ENCODE measurements at regions of chrX and their contacts with region 1.

Region 1: DNA sequence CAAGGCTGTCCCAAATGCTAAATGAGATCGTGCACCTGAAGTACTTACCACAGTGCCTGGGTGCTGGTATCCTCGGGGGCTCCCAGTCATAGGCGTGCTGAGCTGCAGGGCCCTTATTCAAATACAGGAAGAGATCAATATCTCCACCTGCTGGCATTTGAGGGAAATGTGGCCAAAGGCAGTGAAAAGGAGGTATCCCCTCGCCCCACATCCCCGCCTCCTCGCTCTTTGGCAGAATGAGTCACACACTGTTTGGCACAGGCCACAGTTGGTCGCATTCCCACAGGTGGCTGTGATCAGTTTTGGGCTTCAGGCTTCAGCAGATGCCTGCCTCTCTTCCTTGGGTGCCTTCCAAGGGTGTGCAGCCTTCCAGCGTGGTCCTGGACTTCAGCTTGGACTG is 28.4 kb downstream of the ZNF185 start:
- H3K4me3 ChIP-seq: no peak overlapping the region
- H3K27ac ChIP-seq: no peak overlapping the region
- H3K4me1 ChIP-seq: no peaks in the 10 kb centered on the region
- CTCF ChIP-seq: peak; percentile 30; the same call in 1 of the 2 replicates

Region 2: DNA sequence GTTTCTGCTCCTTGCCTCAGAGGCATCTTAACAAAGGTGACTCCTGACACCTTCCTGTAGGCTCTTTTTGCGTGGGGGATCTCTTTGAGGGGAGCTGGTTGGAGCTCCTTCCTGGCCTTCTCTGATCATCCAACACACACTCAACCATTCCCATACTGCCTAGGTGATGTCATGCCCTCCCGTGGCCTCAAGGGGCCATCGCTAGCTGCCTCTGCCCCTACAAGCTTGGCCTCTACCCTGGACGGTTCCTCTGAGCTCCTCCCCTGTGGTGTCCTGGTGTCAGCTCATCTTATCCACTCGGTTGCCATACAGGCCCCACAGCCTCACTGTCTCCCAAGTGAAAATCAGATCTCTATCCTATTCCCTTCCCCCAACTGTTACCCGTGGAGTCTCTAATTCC is 42.1 kb before region 1 on chrX:
- CTCF ChIA-PET with region 1: interaction called, 10 read pairs
- POLR2A ChIA-PET with region 1: no interaction called
- H3K4me3 ChIP-seq: no peak overlapping the region
- H3K27ac ChIP-seq: no peak overlapping the region
- H3K4me1 ChIP-seq: no peaks in the 10 kb centered on the region
- CTCF ChIP-seq: no peak

Region 3: DNA sequence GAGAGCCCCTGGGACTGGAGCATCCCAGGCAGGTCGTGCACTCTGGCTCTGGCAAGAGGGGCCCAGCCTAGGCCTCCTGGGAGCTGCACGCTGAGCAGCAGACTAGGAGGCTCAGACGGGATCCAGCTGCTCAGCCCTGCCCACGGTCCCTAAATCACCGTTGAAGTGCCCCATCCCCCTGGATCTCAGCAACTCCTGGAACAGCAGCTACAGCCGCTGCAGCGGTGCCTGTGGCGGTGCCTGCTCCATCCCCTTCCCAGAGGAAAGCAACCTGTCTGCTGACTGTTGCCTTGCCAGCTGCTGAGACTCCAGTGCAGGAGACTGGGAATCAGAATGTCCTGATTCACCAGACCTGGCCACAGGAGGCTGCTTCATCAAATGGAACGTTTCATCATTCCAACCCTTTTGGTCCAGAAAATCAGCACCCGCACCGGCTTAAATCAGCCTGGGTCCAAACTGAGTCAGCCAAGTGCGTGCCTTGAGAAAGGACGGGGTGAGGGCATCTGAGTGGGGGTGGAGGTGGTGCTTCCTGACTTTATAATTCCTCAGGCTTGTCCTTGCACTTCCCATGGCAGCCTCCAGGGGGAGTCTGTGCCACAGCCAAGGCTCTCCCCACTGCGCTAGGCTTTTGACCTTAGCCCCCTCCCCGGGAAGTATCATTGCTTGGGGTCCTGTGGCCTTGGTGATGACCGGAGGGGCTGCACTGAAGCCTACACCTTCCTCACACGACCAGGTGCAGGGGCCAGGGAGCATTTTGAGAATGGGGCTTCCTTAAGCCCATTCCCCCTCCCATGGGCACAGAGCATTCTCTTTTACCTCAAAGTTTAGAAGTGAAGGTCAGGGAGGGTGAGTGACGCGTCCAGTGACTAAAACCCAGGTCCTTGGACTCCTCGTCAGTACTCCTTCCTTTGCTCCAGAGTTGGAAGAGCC is 21.9 kb before region 1 on chrX:
- CTCF ChIA-PET with region 1: interaction called, 15 read pairs
- POLR2A ChIA-PET with region 1: interaction called, 3 read pairs
- H3K4me3 ChIP-seq: no peak overlapping the region
- H3K27ac ChIP-seq: no peak overlapping the region
- H3K4me1 ChIP-seq: no peaks in the 10 kb centered on the region
- CTCF ChIP-seq: peak; percentile 82

Region 4: DNA sequence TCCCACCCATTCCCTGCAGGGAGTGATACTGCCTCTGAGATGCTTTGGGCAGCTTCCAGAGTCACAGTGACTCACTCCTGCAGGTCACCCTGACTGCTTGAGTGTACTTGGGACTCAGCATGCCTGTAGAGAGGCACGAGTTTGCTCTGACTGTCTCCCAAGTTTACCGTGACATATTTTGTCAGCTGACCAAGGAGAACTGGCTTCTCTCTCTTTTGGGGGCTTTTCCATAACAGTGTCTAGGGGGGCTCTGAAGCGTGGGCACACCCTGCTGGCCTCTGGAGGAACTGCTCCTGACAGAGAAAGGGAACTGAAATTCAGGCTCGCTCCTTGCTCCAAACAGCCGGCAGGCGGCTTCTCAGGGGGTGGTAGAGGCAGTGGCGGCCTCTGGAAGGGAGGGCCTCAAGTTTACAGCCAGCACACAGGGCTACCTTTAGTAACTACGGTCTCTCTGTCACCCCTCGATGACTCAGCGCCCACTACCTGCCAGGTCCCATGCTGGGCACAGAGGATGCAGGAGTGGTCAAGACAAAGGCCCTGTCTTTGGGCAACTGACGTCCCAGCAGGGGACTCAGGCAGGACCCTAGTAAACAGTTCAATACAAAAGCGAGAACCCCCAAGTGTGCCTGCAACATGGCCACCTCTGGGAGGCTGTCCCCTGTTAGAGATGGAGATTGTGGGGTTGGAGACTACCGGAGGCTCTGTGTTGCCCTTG is 10.6 kb before region 1 on chrX:
- CTCF ChIA-PET with region 1: interaction called, 26 read pairs
- POLR2A ChIA-PET with region 1: no interaction called
- H3K4me3 ChIP-seq: no peak overlapping the region
- H3K27ac ChIP-seq: no peak overlapping the region
- H3K4me1 ChIP-seq: no peaks in the 10 kb centered on the region
- CTCF ChIP-seq: peak; percentile 47

Region 5: GRCh38 chrX:152941328-152942106 is 15.2 kb after region 1 on chrX:
- CTCF ChIA-PET with region 1: interaction called, 10 read pairs
- POLR2A ChIA-PET with region 1: no interaction called
- H3K4me3 ChIP-seq: peak overlapping the region; percentile 56
- H3K27ac ChIP-seq: no peak overlapping the region; the same call in 1 of the 2 replicates
- H3K4me1 ChIP-seq: no peaks in the 10 kb centered on the region
- CTCF ChIP-seq: peak; percentile 94